Naive thymus-derived CD4-positive, alpha-beta T cell (primary cell): ENCODE measurements at regions of chr14 and their contacts with region 1.

Region 1: DNA sequence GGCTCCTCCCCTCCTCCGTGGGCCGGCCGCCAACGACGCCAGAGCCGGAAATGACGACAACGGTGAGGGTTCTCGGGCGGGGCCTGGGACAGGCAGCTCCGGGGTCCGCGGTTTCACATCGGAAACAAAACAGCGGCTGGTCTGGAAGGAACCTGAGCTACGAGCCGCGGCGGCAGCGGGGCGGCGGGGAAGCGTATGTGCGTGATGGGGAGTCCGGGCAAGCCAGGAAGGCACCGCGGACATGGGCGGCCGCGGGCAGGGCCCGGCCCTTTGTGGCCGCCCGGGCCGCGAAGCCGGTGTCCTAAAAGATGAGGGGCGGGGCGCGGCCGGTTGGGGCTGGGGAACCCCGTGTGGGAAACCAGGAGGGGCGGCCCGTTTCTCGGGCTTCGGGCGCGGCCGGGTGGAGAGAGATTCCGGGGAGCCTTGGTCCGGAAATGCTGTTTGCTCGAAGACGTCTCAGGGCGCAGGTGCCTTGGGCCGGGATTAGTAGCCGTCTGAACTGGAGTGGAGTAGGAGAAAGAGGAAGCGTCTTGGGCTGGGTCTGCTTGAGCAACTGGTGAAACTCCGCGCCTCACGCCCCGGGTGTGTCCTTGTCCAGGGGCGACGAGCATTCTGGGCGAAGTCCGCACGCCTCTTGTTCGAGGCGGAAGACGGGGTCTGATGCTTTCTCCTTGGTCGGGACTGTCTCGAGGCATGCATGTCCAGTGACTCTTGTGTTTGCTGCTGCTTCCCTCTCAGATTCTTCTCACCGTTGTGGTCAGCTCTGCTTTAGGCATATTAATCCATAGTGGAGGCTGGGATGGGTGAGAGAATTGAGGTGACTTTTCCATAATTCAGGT is at the start of gene PSEN1:
- DNase-seq: peak; percentile 97 to 100 (median 98)
- ATAC-seq: peak; percentile 96
- H3K4me3 ChIP-seq: peak within 1 kb of the TSS; percentile 93
- H3K4me3 Mint-ChIP-seq: peak within 1 kb of the TSS; percentile 82 to 99 (median 91)
- H3K27ac ChIP-seq: peak within 1 kb of the TSS; percentile 98
- H3K27ac Mint-ChIP-seq: peak within 1 kb of the TSS; percentile 71 to 99 (median 96)
- H3K4me1 ChIP-seq: peaks cover 7 to 17% of the 10 kb centered on the region in 2 donors
- H3K4me1 Mint-ChIP-seq: peaks cover 17 to 39% (median 36%) of the 10 kb centered on the region in 7 donors
- H3K27me3 ChIP-seq: no peaks in the 10 kb centered on the region
- H3K27me3 Mint-ChIP-seq: no peaks in the 10 kb centered on the region
- total RNA-seq, gene PSEN1: 32.7 to 55.8 (median 49.3) TPM

Region 2: GRCh38 chr14:71753126-71753830 is 1383.3 kb before region 1 on chr14:
- CTCF ChIA-PET with region 1: no interaction called
- POLR2A ChIA-PET with region 1: no interaction called
- intact Hi-C with region 1: no loop called
- DNase-seq: peak; percentile 29 to 67 (median 57)
- ATAC-seq: peak; percentile 66
- H3K4me3 ChIP-seq: no peak overlapping the region
- H3K4me3 Mint-ChIP-seq: peak overlapping the region in 3 of 10 donors; percentile 3 to 34 (median 21)
- H3K27ac ChIP-seq: no peak overlapping the region
- H3K27ac Mint-ChIP-seq: no peak overlapping the region
- H3K4me1 ChIP-seq: no peaks in the 10 kb centered on the region
- H3K4me1 Mint-ChIP-seq: peaks cover 0 to 18% (median 0%) of the 10 kb centered on the region in 7 donors
- H3K27me3 ChIP-seq: no peaks in the 10 kb centered on the region
- H3K27me3 Mint-ChIP-seq: peaks cover 0 to 5% (median 0%) of the 10 kb centered on the region in 5 donors

Region 3: DNA sequence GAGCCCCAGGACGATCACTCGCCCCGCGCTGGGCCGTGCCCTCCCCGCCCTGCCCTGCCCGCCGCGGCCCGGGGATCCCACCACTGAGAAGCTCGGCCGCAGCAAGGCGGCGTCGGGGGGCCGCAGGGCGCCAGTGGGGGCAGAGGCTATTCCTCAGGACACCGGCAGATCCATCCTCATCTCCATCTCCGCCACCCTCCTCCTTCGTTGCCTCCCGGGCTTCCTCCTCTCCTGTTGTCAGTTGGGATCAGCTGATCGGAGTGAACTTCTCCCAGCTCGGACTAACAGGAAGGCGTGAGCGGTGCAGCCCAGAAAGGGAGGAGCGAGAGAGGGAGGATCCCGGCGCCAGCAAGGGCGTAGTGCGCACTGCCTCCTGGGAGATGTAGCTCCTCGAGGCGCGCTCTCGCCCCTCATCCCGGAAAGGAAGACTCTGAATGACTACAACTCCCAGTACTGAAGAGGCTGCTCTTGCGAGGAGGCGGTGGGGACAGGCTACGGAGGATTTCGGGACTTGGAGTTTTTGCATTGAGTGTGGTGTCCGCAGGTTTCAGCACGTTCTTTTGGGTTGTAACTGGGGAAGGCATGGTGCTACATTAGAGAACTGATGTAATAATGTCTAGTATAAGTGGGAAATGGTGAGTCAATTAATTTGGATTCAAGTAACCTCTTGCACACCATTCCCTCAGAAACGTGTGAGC is 109.6 kb before region 1 on chr14 and contains the start of gene ZFYVE1:
- CTCF ChIA-PET with region 1: no interaction called
- POLR2A ChIA-PET with region 1: no interaction called
- intact Hi-C with region 1: loop called (anchors 1 kb)
- DNase-seq: peak; percentile 65 to 91 (median 86)
- ATAC-seq: peak; percentile 100
- H3K4me3 ChIP-seq: peak within 1 kb of the TSS; percentile 74
- H3K4me3 Mint-ChIP-seq: peak within 1 kb of the TSS; percentile 80 to 99 (median 96)
- H3K27ac ChIP-seq: peak within 1 kb of the TSS; percentile 74
- H3K27ac Mint-ChIP-seq: peak within 1 kb of the TSS; percentile 71 to 96 (median 83)
- H3K4me1 ChIP-seq: peaks cover 11 to 12% of the 10 kb centered on the region in 2 donors
- H3K4me1 Mint-ChIP-seq: peaks cover 33 to 50% (median 45%) of the 10 kb centered on the region in 7 donors
- H3K27me3 ChIP-seq: no peaks in the 10 kb centered on the region
- H3K27me3 Mint-ChIP-seq: no peaks in the 10 kb centered on the region
- total RNA-seq, gene ZFYVE1: 15.3 to 24.8 (median 19.1) TPM

Region 4: GRCh38 chr14:73124180-73124894 is 12.3 kb before region 1 on chr14:
- CTCF ChIA-PET with region 1: no interaction called
- POLR2A ChIA-PET with region 1: interaction called, 6 read pairs
- intact Hi-C with region 1: loop called in 1 of 2 experiments (anchors 1 kb)
- DNase-seq: no peak
- ATAC-seq: no peak
- H3K4me3 ChIP-seq: no peak overlapping the region
- H3K4me3 Mint-ChIP-seq: no peak overlapping the region
- H3K27ac ChIP-seq: no peak overlapping the region
- H3K27ac Mint-ChIP-seq: peak overlapping the region in 6 of 9 donors; percentile 47 to 65 (median 56)
- H3K4me1 ChIP-seq: no peaks in the 10 kb centered on the region
- H3K4me1 Mint-ChIP-seq: peaks cover 0 to 10% (median 5%) of the 10 kb centered on the region in 7 donors
- H3K27me3 ChIP-seq: no peaks in the 10 kb centered on the region
- H3K27me3 Mint-ChIP-seq: no peaks in the 10 kb centered on the region